ENCODE measurements at regions of chr12 and their contacts with region 1.

Region 1: DNA sequence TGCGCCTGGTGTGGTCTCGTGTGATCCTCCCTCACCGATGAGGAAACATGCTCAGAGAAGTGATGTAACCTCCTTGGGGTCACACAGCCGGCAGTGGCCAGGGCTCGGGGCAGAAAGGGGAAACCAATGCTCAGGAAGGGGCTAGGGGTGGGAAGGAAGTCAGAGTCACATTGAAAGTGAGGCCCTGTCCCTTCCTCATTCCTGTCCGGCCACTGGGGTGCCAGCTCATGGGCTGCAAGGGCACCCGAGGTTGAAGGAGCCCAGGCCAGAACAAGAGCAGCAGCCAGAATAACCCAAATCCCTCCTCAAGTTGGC is 5.0 kb downstream of the TRPV4 start:
- DNase-seq: no peak
- H3K4me3 Mint-ChIP-seq: no peak overlapping the region
- H3K27ac Mint-ChIP-seq: no peak overlapping the region
- H3K4me1 Mint-ChIP-seq: peaks cover 7% of the 10 kb centered on the region
- H3K27me3 Mint-ChIP-seq: peaks cover 24% of the 10 kb centered on the region

Region 2: GRCh38 chr12:109744986-109745942 is 82.9 kb before region 1 on chr12:
- CTCF ChIA-PET with region 1: no interaction called
- POLR2A ChIA-PET with region 1: no interaction called
- DNase-seq: no peak
- H3K4me3 Mint-ChIP-seq: no peak overlapping the region
- H3K27ac Mint-ChIP-seq: no peak overlapping the region
- H3K4me1 Mint-ChIP-seq: no peaks in the 10 kb centered on the region
- H3K27me3 Mint-ChIP-seq: peaks cover 16% of the 10 kb centered on the region

Region 3: DNA sequence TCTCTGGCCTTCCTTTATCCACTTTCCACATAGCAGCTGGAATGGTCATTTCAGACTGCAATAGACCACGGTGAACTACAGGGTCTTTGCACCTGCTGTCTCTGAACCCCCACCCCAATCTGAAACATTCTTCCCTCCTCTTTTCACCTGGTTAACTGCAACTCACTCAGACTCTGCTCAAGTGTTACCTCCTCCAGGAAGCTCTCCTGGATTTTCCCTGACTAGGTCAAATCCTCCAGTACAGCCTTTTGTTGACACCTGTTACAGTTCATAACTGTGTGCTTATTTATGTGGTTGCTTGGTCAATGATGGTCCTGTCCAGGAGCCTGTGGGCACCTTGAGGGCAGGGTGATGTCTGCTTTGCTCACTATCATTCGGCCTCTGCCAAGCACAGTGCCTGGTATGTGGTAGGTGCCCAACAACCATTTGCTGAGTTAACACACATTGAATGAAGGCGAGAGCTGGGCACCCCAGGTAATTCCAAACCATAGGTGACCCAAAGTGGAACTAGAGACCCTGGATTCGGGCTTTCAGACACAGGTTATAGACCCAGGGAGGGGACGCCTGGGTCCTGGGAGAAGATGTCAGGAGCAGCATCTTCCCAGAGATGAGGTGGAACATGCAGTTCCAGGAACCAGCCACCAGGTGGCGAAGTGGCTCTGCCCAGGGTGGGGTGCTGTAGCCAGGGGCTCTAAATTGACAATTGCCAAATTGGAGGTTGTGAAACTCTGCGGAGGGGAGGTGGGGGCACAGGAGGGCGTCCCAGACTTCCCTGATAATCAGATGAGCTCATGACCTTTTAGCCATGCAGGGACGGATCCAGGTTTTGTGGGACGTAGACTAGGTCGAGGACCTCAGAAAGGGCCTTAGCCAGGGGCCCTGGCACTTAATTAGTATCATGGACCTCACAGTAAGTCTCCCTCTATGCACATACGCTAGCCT is 23.1 kb before region 1 on chr12:
- CTCF ChIA-PET with region 1: interaction called, 15 read pairs
- POLR2A ChIA-PET with region 1: no interaction called
- DNase-seq: peak; percentile 70
- H3K4me3 Mint-ChIP-seq: no peak overlapping the region
- H3K27ac Mint-ChIP-seq: no peak overlapping the region
- H3K4me1 Mint-ChIP-seq: no peaks in the 10 kb centered on the region
- H3K27me3 Mint-ChIP-seq: no peaks in the 10 kb centered on the region

Region 4: DNA sequence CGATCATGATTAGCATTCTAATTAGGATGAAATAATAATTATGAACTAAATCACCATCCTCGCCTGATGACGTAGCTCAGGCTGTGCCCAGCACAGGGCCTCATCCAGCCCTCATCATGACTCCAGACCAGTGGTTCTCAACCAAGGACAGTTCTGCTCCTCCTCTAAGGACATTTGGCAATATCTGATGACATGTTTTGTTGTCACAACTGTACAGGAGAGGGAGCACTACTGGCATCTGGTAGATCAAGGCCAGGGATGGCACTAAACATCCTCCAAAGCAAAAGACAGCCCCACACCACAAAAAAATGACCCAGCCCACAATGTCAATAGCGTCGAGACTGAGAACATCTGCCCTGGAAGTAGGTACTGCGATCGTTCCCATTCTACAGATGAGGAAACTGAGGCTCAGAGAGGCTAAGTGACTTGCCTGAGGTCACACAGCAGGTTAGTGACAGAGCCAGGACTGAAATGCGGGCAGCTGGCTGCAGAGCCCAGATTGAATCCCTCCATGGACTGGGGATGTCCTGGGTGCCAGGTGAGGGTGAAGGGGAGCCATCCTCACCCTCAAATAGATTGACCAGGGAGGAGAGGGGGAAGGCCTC is 10.5 kb before region 1 on chr12:
- CTCF ChIA-PET with region 1: no interaction called
- POLR2A ChIA-PET with region 1: no interaction called
- DNase-seq: no peak
- H3K4me3 Mint-ChIP-seq: no peak overlapping the region
- H3K27ac Mint-ChIP-seq: no peak overlapping the region
- H3K4me1 Mint-ChIP-seq: no peaks in the 10 kb centered on the region
- H3K27me3 Mint-ChIP-seq: peaks cover 6% of the 10 kb centered on the region

Measured in activated CD4-positive, alpha-beta memory T cell treated with anti-CD3 and anti-CD28 coated beads, Interleukin-2, amount 10 ng/mL, durations not matched to agents 7 days and 5 days (primary cell).